Activated CD4-positive, alpha-beta memory T cell treated with anti-CD3 and anti-CD28 coated beads for 36 hours (primary cell): ENCODE measurements at regions of chr20 and their contacts with region 1.

Region 1: GRCh38 chr20:43456809-43457639 is 672 bp upstream of the SRSF6 start:
- DNase-seq: peak; percentile 91
- H3K4me3 Mint-ChIP-seq: peak overlapping the region; percentile 90
- H3K27ac Mint-ChIP-seq: peak overlapping the region; percentile 100
- H3K4me1 Mint-ChIP-seq: peaks cover 39% of the 10 kb centered on the region
- H3K27me3 Mint-ChIP-seq: peaks cover 5% of the 10 kb centered on the region

Region 2: DNA sequence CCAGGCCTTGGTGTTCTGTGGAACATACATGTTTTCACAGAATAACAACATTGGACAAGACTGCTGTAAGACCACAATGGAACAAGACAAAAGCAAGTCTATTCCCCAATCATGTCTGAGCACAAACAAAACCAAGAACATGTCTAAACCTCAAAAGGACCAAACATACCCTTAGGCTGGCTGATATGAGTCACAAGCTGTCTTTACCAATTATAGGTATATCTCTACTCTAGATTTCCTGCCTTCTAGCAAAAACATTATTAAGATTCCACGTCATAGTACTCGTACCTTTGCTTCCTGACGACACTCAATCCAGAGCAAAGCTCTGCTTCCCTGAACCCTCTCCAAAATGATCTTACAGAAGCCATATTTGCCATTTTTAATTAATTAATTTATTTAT is 35.1 kb after region 1 on chr20:
- CTCF ChIA-PET with region 1: no interaction called
- POLR2A ChIA-PET with region 1: interaction called, 3 read pairs
- intact Hi-C with region 1: loop called (anchors 1 kb)
- DNase-seq: no peak
- H3K4me3 Mint-ChIP-seq: no peak overlapping the region
- H3K27ac Mint-ChIP-seq: peak overlapping the region; percentile 23
- H3K4me1 Mint-ChIP-seq: peaks cover 5% of the 10 kb centered on the region
- H3K27me3 Mint-ChIP-seq: peaks cover 10% of the 10 kb centered on the region

Region 3: GRCh38 chr20:43514062-43514999 is 57.3 kb after region 1 on chr20:
- CTCF ChIA-PET with region 1: no interaction called
- POLR2A ChIA-PET with region 1: interaction called, 11 read pairs
- intact Hi-C with region 1: loop called (anchors 1 kb)
- DNase-seq: peak; percentile 96
- H3K4me3 Mint-ChIP-seq: peak overlapping the region; percentile 87
- H3K27ac Mint-ChIP-seq: peak overlapping the region; percentile 81
- H3K4me1 Mint-ChIP-seq: peaks cover 14% of the 10 kb centered on the region
- H3K27me3 Mint-ChIP-seq: peaks cover 3% of the 10 kb centered on the region

Region 4: DNA sequence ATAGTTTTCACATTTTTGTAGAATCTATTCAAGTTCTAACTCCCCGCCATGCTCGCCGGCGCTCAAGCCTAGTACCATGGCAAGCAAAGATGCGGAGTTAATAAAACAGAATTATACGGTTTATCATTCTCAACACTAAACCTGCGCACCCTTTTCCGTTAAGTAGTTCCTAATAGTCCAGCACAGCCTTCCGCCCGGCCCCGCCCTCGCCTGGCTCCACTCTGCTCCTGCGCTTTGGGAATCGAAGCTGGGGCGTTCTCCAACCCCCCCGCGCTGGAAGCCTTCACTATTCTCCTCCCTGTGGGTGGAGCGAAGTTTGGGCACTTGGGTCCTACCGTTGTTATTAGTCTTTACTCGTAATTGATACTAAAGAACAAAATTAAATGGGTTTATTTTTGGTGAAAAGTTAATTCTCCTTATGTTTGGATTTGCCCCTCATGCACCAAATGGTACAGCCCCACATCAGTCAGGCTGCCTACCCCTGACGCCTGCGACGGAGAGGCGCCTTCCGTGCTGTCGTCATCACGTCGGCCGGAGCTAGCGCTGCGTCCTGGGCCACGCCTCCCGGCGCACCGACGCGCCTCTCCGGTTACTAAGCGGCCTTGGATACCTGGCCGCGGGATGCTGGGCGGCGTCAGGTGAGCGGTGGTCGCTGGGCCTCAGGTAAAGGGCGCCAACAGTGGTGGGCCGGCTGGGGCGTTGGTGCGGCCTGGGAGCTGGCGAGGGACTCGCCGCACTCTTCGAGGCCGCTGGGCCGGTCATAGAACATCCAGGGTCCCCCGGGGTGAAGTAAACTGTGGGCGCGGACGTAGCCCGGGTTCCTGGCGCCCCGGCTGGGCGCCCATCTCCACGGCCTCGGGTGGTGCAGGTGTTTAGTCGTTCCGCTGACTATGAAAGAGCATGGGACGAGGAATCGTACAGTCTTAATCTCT is 133.6 kb after region 1 on chr20 and contains the start of gene IFT52:
- CTCF ChIA-PET with region 1: no interaction called
- POLR2A ChIA-PET with region 1: interaction called, 4 read pairs
- intact Hi-C with region 1: loop called (anchors 2 kb)
- DNase-seq: peak; percentile 92
- H3K4me3 Mint-ChIP-seq: peak within 1 kb of the TSS; percentile 86
- H3K27ac Mint-ChIP-seq: peak within 1 kb of the TSS; percentile 96
- H3K4me1 Mint-ChIP-seq: peaks cover 12% of the 10 kb centered on the region
- H3K27me3 Mint-ChIP-seq: no peaks in the 10 kb centered on the region
- total RNA-seq, gene IFT52: 15.3 to 17.0 TPM

Region 5: DNA sequence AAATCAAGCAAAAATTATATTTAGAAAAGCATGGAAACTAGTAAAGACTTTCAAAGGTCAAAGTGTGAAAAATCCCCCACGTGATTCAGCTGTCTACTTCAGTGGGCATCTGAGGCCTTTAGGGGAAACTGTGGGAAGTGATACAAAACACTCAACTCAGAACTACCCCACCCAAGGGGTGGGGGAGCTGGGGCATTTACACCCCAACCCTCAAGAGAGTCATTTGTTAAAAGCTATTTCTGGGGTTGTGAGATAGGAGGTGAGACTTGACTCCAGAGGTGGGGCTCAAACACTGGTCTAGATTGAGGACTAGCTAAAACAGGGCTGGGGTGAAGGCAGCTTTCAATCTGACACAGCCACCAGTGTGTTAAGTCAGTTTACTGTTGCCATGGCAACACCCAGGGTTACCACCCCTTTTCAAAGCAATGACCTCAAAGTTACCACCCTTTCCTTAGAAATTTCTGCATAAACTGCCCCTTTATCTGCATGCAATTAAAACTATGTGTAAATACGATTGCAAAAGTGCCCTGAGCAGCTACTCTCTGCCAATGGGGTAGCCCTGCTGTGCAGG is 279.6 kb after region 1 on chr20:
- CTCF ChIA-PET with region 1: no interaction called
- POLR2A ChIA-PET with region 1: no interaction called
- intact Hi-C with region 1: loop called (anchors 1 kb)
- DNase-seq: peak; percentile 67
- H3K4me3 Mint-ChIP-seq: no peak overlapping the region
- H3K27ac Mint-ChIP-seq: no peak overlapping the region
- H3K4me1 Mint-ChIP-seq: peaks cover 16% of the 10 kb centered on the region
- H3K27me3 Mint-ChIP-seq: no peaks in the 10 kb centered on the region

Region 6: DNA sequence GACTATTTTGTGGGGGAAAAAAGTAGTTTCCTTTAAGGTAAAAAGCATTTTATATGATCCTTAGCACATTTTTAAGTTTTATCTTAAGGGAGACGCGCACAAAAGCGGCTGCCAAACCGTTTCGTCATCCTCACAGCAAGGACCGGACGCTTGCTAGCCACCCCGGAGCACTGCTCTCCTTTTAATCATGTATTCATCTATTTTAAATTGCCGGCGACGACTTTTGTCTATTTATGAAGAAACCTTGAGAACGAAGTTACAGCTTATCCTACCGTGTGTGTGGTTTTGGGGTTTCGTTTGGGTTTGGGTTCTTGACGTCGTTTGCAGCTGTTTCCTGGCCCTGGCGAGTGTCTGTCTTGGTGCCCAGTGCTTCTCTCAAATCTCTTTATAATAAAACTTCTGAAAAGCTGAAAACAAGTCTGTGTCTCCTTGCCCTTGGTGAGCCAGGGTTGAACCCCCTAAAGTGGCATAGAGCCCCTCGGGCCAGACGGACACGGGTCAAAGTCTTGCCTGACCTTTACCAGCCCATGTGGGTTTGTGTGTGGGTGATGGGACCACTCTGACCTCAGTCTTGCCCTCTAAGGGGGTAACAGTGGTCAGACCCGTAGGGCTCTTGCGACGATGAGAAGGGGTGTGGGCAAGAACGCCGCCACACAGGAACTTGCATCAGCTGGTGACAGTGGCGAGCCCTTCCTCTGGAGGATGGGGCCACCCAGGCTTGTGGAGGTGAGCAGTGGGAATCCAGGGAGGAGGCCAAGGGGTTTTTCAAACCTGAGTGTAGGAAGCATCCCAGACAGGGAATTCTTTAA is 612.4 kb after region 1 on chr20:
- CTCF ChIA-PET with region 1: no interaction called
- POLR2A ChIA-PET with region 1: no interaction called
- intact Hi-C with region 1: loop called (anchors 5 kb)
- DNase-seq: peak; percentile 74
- H3K4me3 Mint-ChIP-seq: peak overlapping the region; percentile 65
- H3K27ac Mint-ChIP-seq: peak overlapping the region; percentile 84
- H3K4me1 Mint-ChIP-seq: peaks cover 50% of the 10 kb centered on the region
- H3K27me3 Mint-ChIP-seq: no peaks in the 10 kb centered on the region

Region 7: GRCh38 chr20:44210422-44211176 is 753.6 kb after region 1 on chr20 and contains the start of gene OSER1:
- CTCF ChIA-PET with region 1: no interaction called
- POLR2A ChIA-PET with region 1: no interaction called
- intact Hi-C with region 1: loop called (anchors 5 kb)
- DNase-seq: peak; percentile 99
- H3K4me3 Mint-ChIP-seq: peak within 1 kb of the TSS; percentile 98
- H3K27ac Mint-ChIP-seq: peak within 1 kb of the TSS; percentile 93
- H3K4me1 Mint-ChIP-seq: peaks cover 61% of the 10 kb centered on the region
- H3K27me3 Mint-ChIP-seq: peaks cover 1% of the 10 kb centered on the region
- total RNA-seq, gene OSER1: 23.4 to 24.2 TPM